Activated T-helper 2 cell treated with anti-CD3 and anti-CD28 coated beads, Interferon-gamma antibody, Interleukin-2, Interleukin-4, amounts not matched to agents 10 μg/mL and 5 μg/mL and 100 μg/mL, durations not matched to agents 14 hours and 24 hours and 36 hours (primary cell): ENCODE measurements at regions of chr18 and their contacts with region 1.

Region 1: GRCh38 chr18:46226461-46226860 is 122.3 kb downstream of the HAUS1 start:
- DNase-seq: no peak
- H3K4me3 Mint-ChIP-seq: no peak overlapping the region
- H3K27ac Mint-ChIP-seq: no peak overlapping the region
- H3K4me1 Mint-ChIP-seq: peaks cover 44% of the 10 kb centered on the region
- H3K27me3 Mint-ChIP-seq: no peaks in the 10 kb centered on the region

Region 2: DNA sequence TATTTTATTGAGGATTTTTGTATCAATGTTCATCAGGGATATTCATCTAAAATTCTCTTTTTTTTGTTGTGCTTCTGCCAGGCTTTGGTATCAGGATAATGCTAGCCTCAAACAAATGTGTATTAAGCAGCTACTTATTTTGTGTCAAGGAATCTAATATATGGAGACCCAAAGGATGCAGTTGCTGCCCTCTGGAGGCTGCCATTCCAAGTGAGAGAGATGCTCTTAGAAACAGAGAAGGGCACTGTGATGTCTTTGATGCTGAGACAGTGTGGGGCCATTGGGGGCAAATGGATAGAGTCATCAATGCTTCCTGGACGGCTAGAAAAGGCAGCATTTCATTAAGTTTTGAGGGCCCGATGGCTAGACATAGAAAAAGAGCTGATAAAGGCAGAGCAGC is 1253.2 kb before region 1 on chr18:
- intact Hi-C with region 1: no loop called
- DNase-seq: no peak
- H3K4me3 Mint-ChIP-seq: no peak overlapping the region
- H3K27ac Mint-ChIP-seq: no peak overlapping the region
- H3K4me1 Mint-ChIP-seq: peaks cover 4% of the 10 kb centered on the region
- H3K27me3 Mint-ChIP-seq: no peaks in the 10 kb centered on the region

Region 3: DNA sequence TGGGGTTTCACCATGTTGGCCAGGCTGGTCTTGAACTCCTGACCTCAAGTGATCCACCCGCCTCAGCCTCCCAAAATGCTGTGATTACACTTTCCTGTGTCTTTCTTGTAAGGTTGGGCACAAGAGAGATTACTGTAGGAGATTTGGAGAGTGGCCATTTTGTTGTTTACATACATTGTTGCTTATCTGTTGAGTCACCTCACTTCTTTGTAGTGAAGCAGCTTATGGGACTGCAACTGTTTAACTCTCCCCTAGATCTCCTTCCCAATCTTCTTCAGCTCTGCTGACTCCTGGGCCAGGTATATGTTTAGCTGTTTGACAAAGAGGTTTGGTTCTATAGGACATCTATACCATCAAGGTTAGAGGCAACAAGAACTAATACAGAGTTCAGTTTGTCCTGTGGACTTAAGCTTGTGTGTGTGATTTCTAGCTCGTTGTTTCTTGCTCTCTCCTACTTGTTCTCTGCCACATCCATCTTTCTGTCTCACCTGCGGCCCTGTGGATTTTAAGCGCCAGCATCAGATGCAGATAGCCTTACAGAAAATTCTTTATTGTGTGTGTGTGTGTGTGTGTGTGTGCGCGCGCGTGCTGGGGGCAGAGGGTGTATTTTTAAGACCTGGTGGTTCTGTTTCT is 26.8 kb before region 1 on chr18:
- intact Hi-C with region 1: loop called (anchors 5 kb)
- DNase-seq: no peak
- H3K4me3 Mint-ChIP-seq: no peak overlapping the region
- H3K27ac Mint-ChIP-seq: peak overlapping the region; percentile 63
- H3K4me1 Mint-ChIP-seq: peaks cover 46% of the 10 kb centered on the region
- H3K27me3 Mint-ChIP-seq: no peaks in the 10 kb centered on the region